ENCODE measurements at regions of chr6 and their contacts with region 1.

Region 1: DNA sequence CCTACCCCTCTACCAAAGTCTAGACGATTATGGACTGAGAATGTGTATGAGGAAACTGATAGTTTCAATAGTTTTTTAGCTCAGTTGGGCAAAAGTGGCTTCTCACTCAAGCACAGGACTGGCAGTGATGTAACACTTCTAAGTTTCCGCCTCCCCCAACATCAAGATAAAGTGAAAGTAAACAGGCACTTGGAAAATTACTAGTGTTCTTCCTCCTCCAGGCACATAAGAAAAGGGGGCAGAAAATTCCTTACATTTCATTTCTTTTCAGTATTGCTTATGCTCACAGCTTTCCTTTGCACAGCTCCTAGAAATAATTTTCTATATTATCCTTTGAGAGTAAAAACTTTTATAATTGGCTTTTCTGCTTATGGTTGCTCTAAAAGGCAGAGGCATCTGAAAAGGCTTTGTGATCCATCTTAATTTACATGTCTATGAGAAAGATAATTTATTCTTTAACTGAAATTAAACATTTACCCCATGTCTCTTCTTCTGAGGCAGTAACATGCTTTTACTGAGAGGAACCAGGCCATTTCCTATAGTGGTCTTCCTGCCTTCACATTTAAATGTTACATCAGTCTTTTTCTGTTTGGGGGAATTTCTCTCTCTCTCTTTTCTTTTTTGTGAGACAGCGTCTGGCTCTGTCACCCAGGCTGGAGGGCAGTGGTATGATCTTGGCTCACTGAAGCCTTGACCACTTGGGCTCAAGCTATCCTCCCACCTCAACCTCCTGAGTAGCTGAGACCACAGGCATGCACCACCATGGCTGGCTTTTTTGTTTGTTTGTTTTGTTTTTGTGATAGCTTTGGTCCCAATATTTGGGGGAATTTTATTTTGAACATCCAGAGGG is 65.0 kb upstream of the EEF1A1 start:
- DNase-seq: peak; percentile 31 to 82
- ATAC-seq: peak; percentile 74 to 85 (median 83)
- H3K4me3 ChIP-seq: peak overlapping the region; percentile 36
- H3K4me3 Mint-ChIP-seq: peak overlapping the region; percentile 80
- H3K27ac ChIP-seq: peak overlapping the region; percentile 97
- H3K27ac Mint-ChIP-seq: peak overlapping the region; percentile 99
- H3K4me1 ChIP-seq: peaks cover 20% of the 10 kb centered on the region
- H3K4me1 Mint-ChIP-seq: peaks cover 23 to 29% of the 10 kb centered on the region in 2 donors
- H3K27me3 ChIP-seq: no peaks in the 10 kb centered on the region
- H3K27me3 Mint-ChIP-seq: no peaks in the 10 kb centered on the region
- CTCF ChIP-seq: no peak

Region 2: DNA sequence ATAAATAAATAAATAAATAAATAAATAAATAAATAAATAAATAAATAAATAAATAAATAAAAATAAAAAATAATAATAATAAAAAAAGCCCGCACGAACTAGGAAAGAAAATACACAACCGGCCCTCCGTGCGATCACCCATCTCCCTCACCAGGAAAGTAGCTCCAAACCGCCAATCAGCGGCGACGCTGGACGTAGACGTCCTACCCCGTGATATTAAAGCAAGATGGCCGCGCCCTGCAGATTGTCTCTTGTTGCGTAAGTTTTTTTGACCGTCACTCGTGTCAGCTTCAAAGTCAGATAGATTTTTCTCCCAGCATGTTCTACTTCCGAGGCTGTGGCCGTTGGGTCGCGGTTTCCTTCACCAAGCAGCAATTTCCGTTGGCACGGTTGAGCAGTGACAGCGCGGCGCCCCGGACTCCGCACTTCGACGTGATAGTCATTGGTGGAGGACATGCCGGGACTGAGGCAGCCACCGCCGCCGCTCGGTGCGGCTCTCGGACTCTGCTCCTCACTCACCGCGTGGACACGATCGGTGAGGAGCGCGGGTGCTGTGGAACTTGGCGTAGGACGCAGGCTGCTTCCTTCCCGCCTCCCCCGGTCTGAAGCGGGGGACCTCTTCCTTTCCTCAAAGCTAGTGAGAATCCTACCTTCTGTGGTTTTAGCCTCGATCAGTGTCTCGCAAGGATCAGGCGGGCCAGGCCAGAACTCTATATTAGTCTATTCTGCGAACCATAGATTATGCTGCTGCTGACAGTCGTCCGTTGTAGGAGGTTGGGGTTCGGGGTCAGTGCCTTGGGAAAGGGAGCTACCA is 124.0 kb before region 1 on chr6 and contains the start of gene MTO1:
- intact Hi-C with region 1: loop called (anchors 5 kb)
- DNase-seq: peak; percentile 79 to 94
- ATAC-seq: peak; percentile 91 to 96 (median 92)
- H3K4me3 ChIP-seq: peak within 1 kb of the TSS; percentile 86
- H3K4me3 Mint-ChIP-seq: peak within 1 kb of the TSS; percentile 98
- H3K27ac ChIP-seq: peak within 1 kb of the TSS; percentile 93
- H3K27ac Mint-ChIP-seq: peak within 1 kb of the TSS; percentile 98 to 99
- H3K4me1 ChIP-seq: peaks cover 21% of the 10 kb centered on the region
- H3K4me1 Mint-ChIP-seq: peaks cover 25 to 26% of the 10 kb centered on the region in 2 donors
- H3K27me3 ChIP-seq: no peaks in the 10 kb centered on the region
- H3K27me3 Mint-ChIP-seq: no peaks in the 10 kb centered on the region
- CTCF ChIP-seq: no peak
- total RNA-seq, gene MTO1: 37.8 to 46.1 (median 41.3) TPM

Region 3: GRCh38 chr6:73566954-73567591 is 18.7 kb before region 1 on chr6:
- intact Hi-C with region 1: no loop called
- DNase-seq: no peak
- ATAC-seq: no peak
- H3K4me3 ChIP-seq: no peak overlapping the region
- H3K4me3 Mint-ChIP-seq: no peak overlapping the region
- H3K27ac ChIP-seq: no peak overlapping the region
- H3K27ac Mint-ChIP-seq: no peak overlapping the region
- H3K4me1 ChIP-seq: peaks cover 13% of the 10 kb centered on the region
- H3K4me1 Mint-ChIP-seq: peaks cover 10 to 14% of the 10 kb centered on the region in 2 donors
- H3K27me3 ChIP-seq: no peaks in the 10 kb centered on the region
- H3K27me3 Mint-ChIP-seq: no peaks in the 10 kb centered on the region
- CTCF ChIP-seq: no peak

Region 4: GRCh38 chr6:73653571-73654424 is 68.0 kb after region 1 on chr6 and contains the start of gene SLC17A5:
- intact Hi-C with region 1: loop called (anchors 5 kb)
- DNase-seq: peak; percentile 84 to 93
- ATAC-seq: peak; percentile 84 to 95 (median 86)
- H3K4me3 ChIP-seq: peak within 1 kb of the TSS; percentile 81
- H3K4me3 Mint-ChIP-seq: peak within 1 kb of the TSS; percentile 96
- H3K27ac ChIP-seq: peak within 1 kb of the TSS; percentile 95
- H3K27ac Mint-ChIP-seq: peak within 1 kb of the TSS; percentile 94 to 98
- H3K4me1 ChIP-seq: peaks cover 16% of the 10 kb centered on the region
- H3K4me1 Mint-ChIP-seq: peaks cover 47 to 50% of the 10 kb centered on the region in 2 donors
- H3K27me3 ChIP-seq: no peaks in the 10 kb centered on the region
- H3K27me3 Mint-ChIP-seq: no peaks in the 10 kb centered on the region
- CTCF ChIP-seq: no peak
- total RNA-seq, gene SLC17A5: 8.5 to 13.8 (median 9.1) TPM